CD8-positive, alpha-beta T cell (primary cell): ENCODE measurements at regions of chr5 and their contacts with region 1.

Region 1: GRCh38 chr5:56814963-56815658 is at the start of gene MAP3K1:
- DNase-seq: peak; percentile 62 to 92 (median 80)
- ATAC-seq: peak; percentile 71
- H3K4me3 ChIP-seq: peak within 1 kb of the TSS; percentile 61 to 93
- H3K4me3 Mint-ChIP-seq: peak within 1 kb of the TSS; percentile 90
- H3K27ac ChIP-seq: peak within 1 kb of the TSS; percentile 74 to 78
- H3K27ac Mint-ChIP-seq: peak within 1 kb of the TSS; percentile 93
- H3K4me1 ChIP-seq: peaks cover 24% of the 10 kb centered on the region
- H3K4me1 Mint-ChIP-seq: peaks cover 33% of the 10 kb centered on the region
- H3K27me3 ChIP-seq: no peaks in the 10 kb centered on the region
- H3K27me3 Mint-ChIP-seq: no peaks in the 10 kb centered on the region
- CTCF ChIP-seq: no peak
- total RNA-seq, gene MAP3K1: 19.1 TPM

Region 2: DNA sequence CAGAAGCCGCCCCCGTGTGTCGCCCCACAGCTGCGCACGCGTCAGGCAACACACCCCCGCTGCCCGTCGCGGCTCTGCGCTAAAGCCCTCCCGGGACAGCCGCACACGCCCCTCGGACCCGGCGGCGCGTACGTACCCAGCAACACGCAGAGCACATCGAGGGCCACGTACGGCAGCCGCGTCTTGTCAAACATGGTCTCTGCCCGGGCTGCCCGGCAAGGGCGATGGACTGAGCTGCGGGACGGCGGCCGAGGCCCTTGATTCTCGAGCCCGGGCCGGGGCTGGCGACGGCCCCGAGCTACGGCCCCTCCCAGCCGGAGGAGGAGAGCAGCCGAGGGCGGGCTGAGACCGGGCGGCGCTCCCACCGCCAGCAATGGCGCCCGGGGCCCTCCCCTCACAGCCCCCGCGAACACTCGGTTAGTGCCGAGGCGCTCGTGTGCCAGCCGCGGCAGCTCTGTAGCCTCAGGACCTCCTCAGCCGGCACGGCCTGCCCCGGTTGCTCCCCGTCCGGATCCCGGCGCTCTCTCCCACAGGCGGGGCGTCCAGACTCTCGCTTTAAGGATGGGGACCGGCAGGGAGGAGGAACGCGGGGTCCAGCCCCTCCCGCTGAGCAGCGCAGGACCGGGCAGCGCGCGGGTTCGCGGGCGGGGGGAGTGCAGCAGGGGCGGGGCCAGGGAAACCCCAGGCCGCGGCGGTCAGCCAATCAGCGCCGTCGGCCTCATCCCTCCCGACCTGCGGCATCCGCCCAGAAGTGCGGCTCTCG is 1280.5 kb before region 1 on chr5 and contains the start of gene PLPP1:
- CTCF ChIA-PET with region 1: no interaction called
- POLR2A ChIA-PET with region 1: no interaction called
- intact Hi-C with region 1: loop called (anchors 2 to 10 kb)
- DNase-seq: peak; percentile 57 to 93 (median 79)
- ATAC-seq: peak; percentile 79
- H3K4me3 ChIP-seq: peak within 1 kb of the TSS; percentile 81 to 97
- H3K4me3 Mint-ChIP-seq: peak within 1 kb of the TSS; percentile 93
- H3K27ac ChIP-seq: peak within 1 kb of the TSS; percentile 81 to 87
- H3K27ac Mint-ChIP-seq: peak within 1 kb of the TSS; percentile 92
- H3K4me1 ChIP-seq: peaks cover 25% of the 10 kb centered on the region
- H3K4me1 Mint-ChIP-seq: peaks cover 37% of the 10 kb centered on the region
- H3K27me3 ChIP-seq: no peaks in the 10 kb centered on the region
- H3K27me3 Mint-ChIP-seq: no peaks in the 10 kb centered on the region
- CTCF ChIP-seq: no peak
- total RNA-seq, gene PLPP1: 5.8 to 5.9 TPM

Region 3: GRCh38 chr5:56328753-56329560 is 486.2 kb before region 1 on chr5:
- CTCF ChIA-PET with region 1: no interaction called
- POLR2A ChIA-PET with region 1: no interaction called
- intact Hi-C with region 1: no loop called
- DNase-seq: peak in 5 of 9 experiments; percentile 5 to 76 (median 42)
- ATAC-seq: peak; percentile 67
- H3K4me3 ChIP-seq: no peak overlapping the region
- H3K4me3 Mint-ChIP-seq: peak overlapping the region; percentile 29
- H3K27ac ChIP-seq: peak overlapping the region in 1 of 2 experiments; percentile 33
- H3K27ac Mint-ChIP-seq: peak overlapping the region; percentile 49
- H3K4me1 ChIP-seq: peaks cover 46% of the 10 kb centered on the region
- H3K4me1 Mint-ChIP-seq: peaks cover 50% of the 10 kb centered on the region
- H3K27me3 ChIP-seq: peaks cover 0 to 2% of the 10 kb centered on the region in 2 experiments
- H3K27me3 Mint-ChIP-seq: no peaks in the 10 kb centered on the region
- CTCF ChIP-seq: no peak

Region 4: GRCh38 chr5:56481428-56482357 is 333.4 kb before region 1 on chr5:
- CTCF ChIA-PET with region 1: no interaction called
- POLR2A ChIA-PET with region 1: no interaction called
- intact Hi-C with region 1: loop called in 1 of 2 experiments (anchors 2 kb)
- DNase-seq: peak in 5 of 9 experiments; percentile 12 to 63 (median 30)
- ATAC-seq: peak; percentile 19
- H3K4me3 ChIP-seq: peak overlapping the region; percentile 48 to 54
- H3K4me3 Mint-ChIP-seq: peak overlapping the region; percentile 85
- H3K27ac ChIP-seq: peak overlapping the region in 1 of 2 experiments; percentile 62
- H3K27ac Mint-ChIP-seq: peak overlapping the region; percentile 83
- H3K4me1 ChIP-seq: peaks cover 14% of the 10 kb centered on the region
- H3K4me1 Mint-ChIP-seq: peaks cover 33% of the 10 kb centered on the region
- H3K27me3 ChIP-seq: no peaks in the 10 kb centered on the region
- H3K27me3 Mint-ChIP-seq: peaks cover 11% of the 10 kb centered on the region
- CTCF ChIP-seq: peak; percentile 13

Region 5: DNA sequence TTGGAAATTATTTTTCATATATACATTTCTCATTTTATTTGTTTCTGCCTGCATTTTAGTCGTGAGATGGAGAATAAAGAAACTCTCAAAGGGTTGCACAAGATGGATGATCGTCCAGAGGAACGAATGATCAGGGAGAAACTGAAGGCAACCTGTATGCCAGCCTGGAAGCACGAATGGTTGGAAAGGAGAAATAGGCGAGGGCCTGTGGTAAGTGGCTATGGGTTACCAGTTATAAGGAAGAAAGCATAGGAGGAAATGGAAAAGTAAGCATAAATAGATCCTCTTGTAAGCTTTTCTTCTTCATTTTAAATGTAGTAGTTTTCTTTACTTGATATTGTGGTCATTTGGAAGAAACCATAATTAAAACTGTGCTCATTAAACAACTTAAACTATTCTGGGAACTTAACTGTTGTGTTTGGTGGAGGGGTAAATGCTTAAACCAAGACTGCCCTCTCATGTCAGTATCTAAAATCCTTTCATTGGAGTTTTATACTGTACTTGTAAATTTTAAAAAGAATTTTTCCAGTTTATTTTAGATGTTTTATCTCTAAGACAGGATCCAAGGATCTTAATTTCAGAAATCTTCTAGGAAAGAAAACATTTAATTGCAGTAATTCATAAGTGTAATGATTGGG is 41.5 kb after region 1 on chr5:
- CTCF ChIA-PET with region 1: interaction called, 3 read pairs
- POLR2A ChIA-PET with region 1: interaction called, 4 read pairs
- intact Hi-C with region 1: loop called in 1 of 2 experiments (anchors 5 kb)
- DNase-seq: no peak
- ATAC-seq: no peak
- H3K4me3 ChIP-seq: no peak overlapping the region
- H3K4me3 Mint-ChIP-seq: no peak overlapping the region
- H3K27ac ChIP-seq: no peak overlapping the region
- H3K27ac Mint-ChIP-seq: peak overlapping the region; percentile 3
- H3K4me1 ChIP-seq: peaks cover 21% of the 10 kb centered on the region
- H3K4me1 Mint-ChIP-seq: peaks cover 46% of the 10 kb centered on the region
- H3K27me3 ChIP-seq: no peaks in the 10 kb centered on the region
- H3K27me3 Mint-ChIP-seq: no peaks in the 10 kb centered on the region
- CTCF ChIP-seq: no peak

Region 6: DNA sequence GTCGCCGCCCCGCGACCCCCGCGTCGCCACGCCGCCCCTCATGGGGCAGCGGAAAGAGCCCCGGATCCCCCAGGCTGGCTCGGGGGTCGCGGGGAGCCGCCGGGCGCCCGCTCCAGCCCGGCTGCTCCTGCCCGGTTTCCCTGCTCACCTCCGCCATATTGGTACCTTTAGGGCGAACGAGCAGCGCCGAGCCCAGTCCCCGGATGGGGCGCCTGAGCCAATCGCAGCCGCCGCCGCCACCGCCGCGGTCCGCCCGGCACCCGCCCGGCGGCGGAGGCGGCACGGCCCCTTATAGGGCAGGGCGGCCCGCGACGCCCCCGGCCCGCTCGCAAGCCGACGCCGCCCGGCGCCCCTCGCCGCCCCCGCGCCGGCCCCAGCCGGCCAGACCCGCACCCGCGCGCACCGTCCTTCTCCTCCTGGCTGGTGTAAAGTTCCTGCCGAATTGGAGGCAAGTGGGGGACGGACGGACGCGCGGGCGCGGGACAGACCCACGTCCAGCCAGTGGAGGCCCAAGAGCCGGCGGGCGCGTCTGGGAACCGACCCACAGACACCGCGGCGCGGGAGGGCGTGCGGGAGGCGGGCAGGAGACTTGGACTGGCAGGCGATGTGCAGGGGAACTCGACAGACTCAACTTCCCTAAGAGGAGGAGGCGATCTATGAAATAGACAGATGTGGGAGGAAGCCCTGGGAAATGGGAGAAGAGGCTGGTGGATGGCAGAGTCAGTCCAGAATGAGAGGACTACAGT is 137.0 kb after region 1 on chr5 and contains the start of gene MIER3:
- CTCF ChIA-PET with region 1: no interaction called
- POLR2A ChIA-PET with region 1: no interaction called
- intact Hi-C with region 1: loop called (anchors 2 to 5 kb)
- DNase-seq: peak; percentile 50 to 86 (median 78)
- ATAC-seq: peak; percentile 92
- H3K4me3 ChIP-seq: peak within 1 kb of the TSS; percentile 66 to 69
- H3K4me3 Mint-ChIP-seq: peak within 1 kb of the TSS; percentile 95
- H3K27ac ChIP-seq: peak within 1 kb of the TSS; percentile 37 to 40
- H3K27ac Mint-ChIP-seq: peak within 1 kb of the TSS; percentile 87
- H3K4me1 ChIP-seq: peaks cover 16% of the 10 kb centered on the region
- H3K4me1 Mint-ChIP-seq: peaks cover 23% of the 10 kb centered on the region
- H3K27me3 ChIP-seq: no peaks in the 10 kb centered on the region
- H3K27me3 Mint-ChIP-seq: peaks cover 14% of the 10 kb centered on the region
- CTCF ChIP-seq: no peak
- total RNA-seq, gene MIER3: 29.3 to 39.2 TPM

Region 7: DNA sequence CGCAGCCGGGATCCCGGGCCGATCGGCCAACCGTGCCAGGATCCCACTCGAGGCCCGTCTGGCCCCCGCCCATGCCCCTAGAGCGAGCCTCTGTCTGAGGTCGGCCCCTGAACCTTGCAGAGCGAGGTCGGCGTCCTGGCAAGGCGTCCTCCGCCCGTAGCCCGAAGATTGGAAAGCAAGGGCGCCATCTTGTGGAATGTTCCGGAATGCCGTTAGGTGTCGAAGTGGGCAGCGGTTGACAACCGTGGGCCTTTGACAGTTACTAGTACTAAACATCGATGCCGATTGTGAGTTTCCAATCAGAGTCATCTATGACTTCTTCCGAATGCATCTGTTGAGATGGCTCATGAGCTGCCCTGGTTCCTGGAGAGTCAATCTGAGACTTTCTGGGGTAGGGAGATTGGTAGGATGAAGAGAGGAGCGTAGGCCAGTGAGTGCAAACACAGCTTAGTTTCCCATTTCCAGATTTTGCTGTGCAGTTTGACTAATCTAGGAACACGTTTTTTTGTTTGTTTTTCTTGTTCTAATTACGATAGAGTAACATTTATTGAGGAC is 1645.7 kb after region 1 on chr5:
- CTCF ChIA-PET with region 1: no interaction called
- POLR2A ChIA-PET with region 1: no interaction called
- intact Hi-C with region 1: loop called (anchors 5 to 10 kb)
- DNase-seq: peak; percentile 79 to 94 (median 89)
- ATAC-seq: peak; percentile 67
- H3K4me3 ChIP-seq: peak overlapping the region; percentile 66 to 81
- H3K4me3 Mint-ChIP-seq: peak overlapping the region; percentile 90
- H3K27ac ChIP-seq: peak overlapping the region; percentile 79 to 87
- H3K27ac Mint-ChIP-seq: peak overlapping the region; percentile 83
- H3K4me1 ChIP-seq: peaks cover 7% of the 10 kb centered on the region
- H3K4me1 Mint-ChIP-seq: peaks cover 13% of the 10 kb centered on the region
- H3K27me3 ChIP-seq: peaks cover 4 to 8% of the 10 kb centered on the region in 2 experiments
- H3K27me3 Mint-ChIP-seq: peaks cover 11% of the 10 kb centered on the region
- CTCF ChIP-seq: peak; percentile 79